Left lung (tissue), 14 donors: ENCODE measurements at regions of chr20 and their contacts with region 1.

Region 1: GRCh38 chr20:56554869-56555268 is 21.8 kb downstream of the FAM209B start:
- DNase-seq: peak in 2 of 4 donors; percentile 25 to 56
- ATAC-seq: peak; percentile 90
- H3K4me3 ChIP-seq: no peak overlapping the region
- H3K27ac ChIP-seq: peak overlapping the region in 1 of 2 donors; percentile 44
- H3K4me1 ChIP-seq: peaks cover 5 to 10% of the 10 kb centered on the region in 2 donors
- H3K27me3 ChIP-seq: no peaks in the 10 kb centered on the region
- CTCF ChIP-seq: peak; percentile 9 to 33

Region 2: GRCh38 chr20:56306912-56307311 is 248.0 kb before region 1 on chr20:
- intact Hi-C with region 1: no loop called
- DNase-seq: no peak
- ATAC-seq: no peak
- H3K4me3 ChIP-seq: no peak overlapping the region
- H3K27ac ChIP-seq: no peak overlapping the region
- H3K4me1 ChIP-seq: no peaks in the 10 kb centered on the region
- H3K27me3 ChIP-seq: peaks cover 0 to 43% of the 10 kb centered on the region in 2 donors
- CTCF ChIP-seq: no peak

Region 3: GRCh38 chr20:56683080-56683847 is 128.4 kb after region 1 on chr20:
- intact Hi-C with region 1: no loop called
- DNase-seq: no peak
- ATAC-seq: no peak
- H3K4me3 ChIP-seq: no peak overlapping the region
- H3K27ac ChIP-seq: no peak overlapping the region
- H3K4me1 ChIP-seq: no peaks in the 10 kb centered on the region
- H3K27me3 ChIP-seq: peaks cover 0 to 62% of the 10 kb centered on the region in 2 donors
- CTCF ChIP-seq: no peak

Region 4: DNA sequence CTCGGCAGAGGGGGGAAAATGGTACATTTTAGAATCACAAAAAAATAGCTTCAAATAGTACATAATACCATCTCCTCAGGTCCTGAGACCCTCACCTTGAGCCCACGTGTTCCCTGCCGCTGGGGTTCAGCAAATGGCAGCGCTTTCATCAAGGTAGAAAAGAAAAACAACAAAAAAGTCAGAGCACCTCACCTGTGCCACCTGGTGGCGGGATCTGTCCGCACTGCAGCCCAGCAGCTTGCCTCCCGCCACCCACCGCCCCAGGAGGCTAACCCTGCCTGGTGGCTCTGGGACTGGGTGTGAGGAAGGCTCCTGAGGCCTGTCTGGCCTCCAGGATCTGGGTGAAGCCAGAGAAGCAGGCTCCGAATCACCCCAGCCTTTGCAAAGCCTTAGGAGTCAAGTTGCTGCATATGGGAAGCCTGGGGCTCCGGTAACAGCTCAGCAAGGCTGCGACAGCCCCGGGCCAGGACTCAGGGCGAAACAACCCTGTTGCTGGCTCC is 440.8 kb after region 1 on chr20:
- intact Hi-C with region 1: loop called in 1 of 2 experiments (anchors 5 kb)
- DNase-seq: peak in 2 of 4 donors; percentile 10 to 67
- ATAC-seq: peak; percentile 24
- H3K4me3 ChIP-seq: no peak overlapping the region
- H3K27ac ChIP-seq: no peak overlapping the region
- H3K4me1 ChIP-seq: no peaks in the 10 kb centered on the region
- H3K27me3 ChIP-seq: peaks cover 0 to 12% of the 10 kb centered on the region in 2 donors
- CTCF ChIP-seq: peak in 1 of 2 donors; percentile 34

Region 5: GRCh38 chr20:57076098-57076651 is 521.3 kb after region 1 on chr20:
- intact Hi-C with region 1: no loop called
- DNase-seq: no peak
- ATAC-seq: no peak
- H3K4me3 ChIP-seq: no peak overlapping the region
- H3K27ac ChIP-seq: no peak overlapping the region
- H3K4me1 ChIP-seq: no peaks in the 10 kb centered on the region
- H3K27me3 ChIP-seq: peaks cover 15 to 42% of the 10 kb centered on the region in 2 donors
- CTCF ChIP-seq: no peak